Heart right ventricle (tissue), 16 donors: ENCODE measurements at regions of chr6 and their contacts with region 1.

Region 1: DNA sequence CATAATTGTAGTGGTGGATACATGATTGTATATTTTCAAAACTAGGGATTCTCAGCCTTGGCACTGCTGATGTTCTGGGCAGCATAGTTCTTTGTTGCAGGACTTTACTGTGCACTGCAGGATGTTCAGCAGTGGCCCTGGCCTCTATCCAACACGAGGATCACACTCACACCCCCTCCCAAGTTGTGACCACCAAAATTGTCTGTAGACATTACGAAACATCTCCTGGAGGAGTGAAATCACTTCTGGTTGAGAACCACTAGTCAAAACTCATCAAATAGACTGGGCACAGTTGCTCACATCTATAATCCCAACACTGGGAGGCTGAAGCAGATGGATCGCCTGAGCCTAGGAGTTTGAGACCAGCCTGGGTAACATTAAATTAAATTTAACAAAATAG is 123.1 kb upstream of the CDYL start:
- DNase-seq: no peak
- ATAC-seq: no peak
- H3K4me3 ChIP-seq: no peak overlapping the region
- H3K27ac ChIP-seq: no peak overlapping the region
- H3K4me1 ChIP-seq: peaks cover 0 to 2% (median 0%) of the 10 kb centered on the region in 9 donors
- H3K27me3 ChIP-seq: no peaks in the 10 kb centered on the region
- CTCF ChIP-seq: no peak

Region 2: GRCh38 chr6:4460586-4461475 is 192.3 kb before region 1 on chr6:
- intact Hi-C with region 1: no loop called
- DNase-seq: peak; percentile 39 to 67
- ATAC-seq: peak; percentile 82 to 95 (median 92)
- H3K4me3 ChIP-seq: peak overlapping the region in 2 of 10 donors; percentile 9 to 14
- H3K27ac ChIP-seq: peak overlapping the region; percentile 33 to 77 (median 67)
- H3K4me1 ChIP-seq: peaks cover 5 to 23% (median 19%) of the 10 kb centered on the region in 9 donors
- H3K27me3 ChIP-seq: no peaks in the 10 kb centered on the region
- CTCF ChIP-seq: no peak

Region 3: DNA sequence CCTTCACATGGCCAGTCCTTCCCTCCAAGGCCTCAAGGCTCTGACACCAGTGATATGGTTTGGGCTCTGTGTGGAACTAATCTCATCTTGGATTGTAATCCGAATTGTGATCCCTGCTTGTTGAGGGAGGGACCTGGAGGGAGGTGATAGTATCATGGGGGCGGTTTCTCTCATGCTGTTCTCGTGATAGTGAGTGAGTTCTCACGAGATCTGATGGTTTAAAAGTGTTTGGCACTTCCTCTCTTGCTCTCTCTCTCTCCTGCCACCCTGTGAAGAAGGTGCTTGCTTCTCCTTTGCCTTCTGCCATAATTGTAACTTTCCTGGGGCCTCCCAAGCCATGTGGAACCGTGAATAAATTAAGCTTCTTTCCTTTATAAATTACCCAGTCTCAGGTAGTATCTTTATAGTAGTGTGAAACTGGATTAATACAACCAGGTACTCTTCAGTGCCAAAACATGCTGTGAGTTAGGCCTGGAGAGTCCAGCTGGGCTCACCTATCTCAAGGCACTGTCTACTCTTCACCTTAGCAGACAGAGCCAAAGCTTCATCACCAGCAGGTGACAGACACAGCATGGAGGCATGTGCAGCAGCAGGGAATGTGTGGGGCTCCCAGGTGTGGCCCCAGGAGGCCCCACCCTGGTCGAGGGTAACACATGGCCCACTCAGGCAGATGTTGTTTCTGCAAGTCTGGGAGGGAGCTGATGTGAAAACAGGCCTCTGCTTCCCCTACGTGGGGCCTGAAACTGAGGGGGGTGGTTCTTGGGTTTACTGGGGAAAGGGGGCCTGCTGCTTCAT is 25.6 kb after region 1 on chr6:
- intact Hi-C with region 1: loop called in 1 of 10 experiments (anchors 1 kb)
- DNase-seq: no peak
- ATAC-seq: no peak
- H3K4me3 ChIP-seq: no peak overlapping the region
- H3K27ac ChIP-seq: no peak overlapping the region
- H3K4me1 ChIP-seq: peaks cover 0 to 8% (median 0%) of the 10 kb centered on the region in 9 donors
- H3K27me3 ChIP-seq: no peaks in the 10 kb centered on the region
- CTCF ChIP-seq: no peak